T-cell (primary cell): ENCODE measurements at regions of chr6 and their contacts with region 1.

Region 1: GRCh38 chr6:158819213-158819909 is at the start of gene EZR:
- DNase-seq: peak; percentile 69 to 92 (median 83)
- ATAC-seq: peak; percentile 60 to 75 (median 66)
- H3K4me3 ChIP-seq: peak within 1 kb of the TSS; percentile 83 to 88
- H3K4me3 Mint-ChIP-seq: peak within 1 kb of the TSS; percentile 77 to 98 (median 98)
- H3K27ac ChIP-seq: peak within 1 kb of the TSS; percentile 98
- H3K27ac Mint-ChIP-seq: peak within 1 kb of the TSS; percentile 85 to 87
- H3K4me1 ChIP-seq: peaks cover 17 to 32% of the 10 kb centered on the region in 2 experiments
- H3K4me1 Mint-ChIP-seq: peaks cover 35 to 49% (median 36%) of the 10 kb centered on the region in 3 donors
- H3K27me3 ChIP-seq: no peaks in the 10 kb centered on the region
- H3K27me3 Mint-ChIP-seq: no peaks in the 10 kb centered on the region
- total RNA-seq, gene EZR: 176 to 286 (median 272) TPM

Region 2: GRCh38 chr6:158644231-158645063 is 174.9 kb before region 1 on chr6 and contains the start of gene DYNLT1:
- CTCF ChIA-PET with region 1: no interaction called
- POLR2A ChIA-PET with region 1: interaction called in 1 of 2 experiments, 12 read pairs
- DNase-seq: peak; percentile 64 to 92 (median 80)
- ATAC-seq: peak; percentile 76 to 89 (median 85)
- H3K4me3 ChIP-seq: peak within 1 kb of the TSS; percentile 81 to 87
- H3K4me3 Mint-ChIP-seq: peak within 1 kb of the TSS; percentile 91 to 99 (median 95)
- H3K27ac ChIP-seq: peak within 1 kb of the TSS; percentile 88
- H3K27ac Mint-ChIP-seq: peak within 1 kb of the TSS; percentile 96 to 97
- H3K4me1 ChIP-seq: peaks cover 16 to 53% of the 10 kb centered on the region in 2 experiments
- H3K4me1 Mint-ChIP-seq: peaks cover 61 to 74% (median 67%) of the 10 kb centered on the region in 3 donors
- H3K27me3 ChIP-seq: no peaks in the 10 kb centered on the region
- H3K27me3 Mint-ChIP-seq: no peaks in the 10 kb centered on the region
- total RNA-seq, gene DYNLT1: 50.8 to 128 (median 59.5) TPM

Region 3: DNA sequence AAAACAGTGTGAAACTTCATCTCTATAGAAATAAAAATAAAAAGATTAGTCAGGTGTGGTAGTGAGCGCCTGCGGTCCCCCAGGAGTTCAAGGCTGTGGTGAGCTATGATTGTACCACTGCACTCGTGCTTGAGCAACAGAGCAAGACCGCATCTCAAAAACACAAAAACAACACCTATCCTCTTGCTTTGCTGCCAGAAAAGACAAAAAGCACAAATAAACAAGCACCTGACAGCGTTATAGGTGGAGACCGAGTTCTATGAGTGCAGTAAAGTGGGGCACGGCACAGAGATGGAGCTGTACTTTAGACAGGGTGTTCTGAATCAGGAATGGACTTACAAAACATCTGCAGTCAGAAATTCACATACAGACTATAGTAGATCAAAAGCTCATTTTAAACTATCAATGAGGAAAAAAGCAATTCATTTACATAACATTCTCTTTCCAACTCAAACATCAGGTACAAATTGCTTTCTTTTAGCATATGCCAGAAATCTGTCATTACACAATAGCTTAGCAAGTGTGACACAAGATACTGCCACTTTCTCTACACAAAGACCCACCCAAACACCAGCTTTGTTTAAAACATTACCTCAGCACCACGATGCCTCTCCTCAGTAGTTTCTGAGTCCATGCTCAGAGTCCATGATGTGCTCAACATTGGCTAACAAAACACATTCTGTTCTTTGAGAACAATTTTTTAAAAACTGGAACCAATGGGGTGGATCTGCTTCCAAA is 10.3 kb before region 1 on chr6:
- CTCF ChIA-PET with region 1: interaction called, 3 read pairs
- POLR2A ChIA-PET with region 1: interaction called, 4 to 24 read pairs
- DNase-seq: peak in 28 of 35 experiments; percentile 17 to 75 (median 40)
- ATAC-seq: peak; percentile 36 to 82 (median 60)
- H3K4me3 ChIP-seq: no peak overlapping the region
- H3K4me3 Mint-ChIP-seq: peak overlapping the region; percentile 41 to 79 (median 58)
- H3K27ac ChIP-seq: peak overlapping the region; percentile 50
- H3K27ac Mint-ChIP-seq: peak overlapping the region; percentile 84 to 85
- H3K4me1 ChIP-seq: peaks cover 52 to 74% of the 10 kb centered on the region in 2 experiments
- H3K4me1 Mint-ChIP-seq: peaks cover 95 to 100% (median 98%) of the 10 kb centered on the region in 3 donors
- H3K27me3 ChIP-seq: no peaks in the 10 kb centered on the region
- H3K27me3 Mint-ChIP-seq: no peaks in the 10 kb centered on the region

Region 4: GRCh38 chr6:158853072-158853871 is 33.9 kb after region 1 on chr6:
- CTCF ChIA-PET with region 1: no interaction called
- POLR2A ChIA-PET with region 1: interaction called, 4 to 25 read pairs
- DNase-seq: peak; percentile 70 to 92 (median 84)
- ATAC-seq: peak; percentile 78 to 85 (median 80)
- H3K4me3 ChIP-seq: peak overlapping the region; percentile 10 to 52
- H3K4me3 Mint-ChIP-seq: no peak overlapping the region
- H3K27ac ChIP-seq: peak overlapping the region; percentile 98
- H3K27ac Mint-ChIP-seq: no peak overlapping the region
- H3K4me1 ChIP-seq: peaks cover 35 to 63% of the 10 kb centered on the region in 2 experiments
- H3K4me1 Mint-ChIP-seq: peaks cover 35 to 52% (median 49%) of the 10 kb centered on the region in 3 donors
- H3K27me3 ChIP-seq: no peaks in the 10 kb centered on the region
- H3K27me3 Mint-ChIP-seq: no peaks in the 10 kb centered on the region